ENCODE measurements at regions of chr3 and their contacts with region 1.

Region 1: DNA sequence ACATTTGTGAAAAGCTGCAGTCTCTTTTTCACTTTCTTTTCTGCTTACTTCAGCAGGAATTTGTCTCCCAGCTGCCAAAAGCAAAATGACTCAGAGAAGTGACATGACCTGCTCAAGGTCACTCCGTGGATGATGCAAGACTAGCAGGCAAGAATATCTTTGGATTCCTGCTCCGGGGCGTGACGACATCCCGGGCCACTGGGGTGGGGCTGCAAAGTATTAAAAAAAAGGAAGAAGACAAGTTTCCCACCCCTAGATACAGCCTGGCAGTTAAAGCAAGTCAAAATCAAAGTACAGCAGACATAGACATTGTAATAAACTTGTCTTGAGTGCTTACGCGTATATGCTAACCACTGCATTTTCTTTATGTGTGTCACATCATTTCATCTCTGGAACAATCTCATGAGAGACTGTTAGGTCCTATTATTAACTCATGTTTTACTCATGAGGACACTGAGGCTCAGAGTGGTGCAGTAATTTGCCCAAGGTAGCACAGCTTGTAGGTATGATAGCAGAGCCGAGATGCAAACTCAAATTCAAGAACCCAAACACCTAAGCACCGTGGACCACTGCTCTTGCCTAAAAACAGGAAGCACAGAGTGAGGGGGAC is 485.2 kb upstream of the PROK2 start:
- DNase-seq: peak; percentile 83 to 91 (median 87)
- ATAC-seq: peak; percentile 83 to 95 (median 92)
- H3K4me3 ChIP-seq: no peak overlapping the region
- H3K27ac ChIP-seq: peak overlapping the region in 6 of 12 donors; percentile 14 to 69 (median 26)
- H3K4me1 ChIP-seq: peaks cover 0 to 59% (median 43%) of the 10 kb centered on the region in 12 donors
- H3K27me3 ChIP-seq: no peaks in the 10 kb centered on the region
- CTCF ChIP-seq: no peak
- POLR2A ChIP-seq: no peak

Region 2: GRCh38 chr3:71875461-71875947 is 394.7 kb before region 1 on chr3:
- intact Hi-C with region 1: loop called in 8 of 10 experiments (anchors 5 to 10 kb)
- DNase-seq: peak; percentile 59 to 85 (median 76)
- ATAC-seq: peak; percentile 80 to 96 (median 91)
- H3K4me3 ChIP-seq: no peak overlapping the region
- H3K27ac ChIP-seq: no peak overlapping the region
- H3K4me1 ChIP-seq: peaks cover 0 to 8% (median 0%) of the 10 kb centered on the region in 12 donors
- H3K27me3 ChIP-seq: peaks cover 0 to 9% (median 0%) of the 10 kb centered on the region in 9 donors
- CTCF ChIP-seq: peak; percentile 77 to 90 (median 85)
- POLR2A ChIP-seq: no peak

Region 3: GRCh38 chr3:71955240-71956068 is 314.7 kb before region 1 on chr3:
- intact Hi-C with region 1: loop called in 8 of 10 experiments (anchors 5 to 10 kb)
- DNase-seq: peak; percentile 62 to 75 (median 72)
- ATAC-seq: peak in 3 of 4 donors; percentile 62 to 76 (median 76)
- H3K4me3 ChIP-seq: no peak overlapping the region
- H3K27ac ChIP-seq: no peak overlapping the region
- H3K4me1 ChIP-seq: peaks cover 0 to 10% (median 5%) of the 10 kb centered on the region in 12 donors
- H3K27me3 ChIP-seq: peaks cover 0 to 8% (median 0%) of the 10 kb centered on the region in 9 donors
- CTCF ChIP-seq: peak; percentile 49 to 84 (median 74)
- POLR2A ChIP-seq: no peak

Region 4: GRCh38 chr3:71962561-71963240 is 307.5 kb before region 1 on chr3:
- intact Hi-C with region 1: loop called in 8 of 10 experiments (anchors 5 to 10 kb)
- DNase-seq: no peak
- ATAC-seq: no peak
- H3K4me3 ChIP-seq: no peak overlapping the region
- H3K27ac ChIP-seq: no peak overlapping the region
- H3K4me1 ChIP-seq: no peaks in the 10 kb centered on the region
- H3K27me3 ChIP-seq: no peaks in the 10 kb centered on the region
- CTCF ChIP-seq: no peak
- POLR2A ChIP-seq: no peak

Region 5: GRCh38 chr3:71984843-71985613 is 285.1 kb before region 1 on chr3:
- intact Hi-C with region 1: loop called in 3 of 10 experiments (anchors 10 kb)
- DNase-seq: no peak
- ATAC-seq: no peak
- H3K4me3 ChIP-seq: no peak overlapping the region
- H3K27ac ChIP-seq: no peak overlapping the region
- H3K4me1 ChIP-seq: peaks cover 0 to 28% (median 0%) of the 10 kb centered on the region in 12 donors
- H3K27me3 ChIP-seq: no peaks in the 10 kb centered on the region
- CTCF ChIP-seq: no peak
- POLR2A ChIP-seq: no peak

Region 6: DNA sequence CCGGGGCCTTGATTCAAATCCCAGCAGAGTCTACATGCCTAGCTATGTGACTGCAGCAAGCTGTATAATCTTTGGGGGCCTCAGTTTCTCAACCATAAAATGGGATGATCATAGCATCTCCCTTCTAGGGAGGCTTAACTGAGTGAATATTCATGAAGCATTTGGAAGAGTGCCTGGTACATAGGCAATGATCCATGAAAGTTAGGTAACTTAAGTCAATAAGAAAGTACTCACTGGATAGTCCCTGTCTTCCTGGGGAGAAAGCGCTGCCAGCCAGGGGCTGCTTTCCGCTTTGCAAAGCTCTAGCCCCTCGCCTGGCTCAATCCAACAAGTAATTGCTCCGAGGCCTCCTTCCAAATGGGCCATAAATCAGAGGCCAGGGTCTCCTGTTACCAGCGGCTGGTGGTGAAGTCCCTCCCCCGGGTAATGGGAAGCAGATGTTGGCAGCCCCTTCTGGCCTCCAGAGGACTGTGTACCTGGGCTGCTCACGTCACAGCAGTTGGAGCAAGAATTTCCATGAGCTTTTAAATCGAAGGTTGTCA is 36.7 kb after region 1 on chr3:
- intact Hi-C with region 1: loop called in 1 of 10 experiments (anchors 5 kb)
- DNase-seq: no peak
- ATAC-seq: no peak
- H3K4me3 ChIP-seq: no peak overlapping the region
- H3K27ac ChIP-seq: no peak overlapping the region
- H3K4me1 ChIP-seq: peaks cover 0 to 28% (median 15%) of the 10 kb centered on the region in 12 donors
- H3K27me3 ChIP-seq: no peaks in the 10 kb centered on the region
- CTCF ChIP-seq: no peak
- POLR2A ChIP-seq: no peak

Region 7: GRCh38 chr3:72339116-72340030 is 69.2 kb after region 1 on chr3:
- intact Hi-C with region 1: loop called in 3 of 10 experiments (anchors 5 to 10 kb)
- DNase-seq: peak in 2 of 5 donors; percentile 45 to 79
- ATAC-seq: peak in 2 of 4 donors; percentile 35 to 75
- H3K4me3 ChIP-seq: no peak overlapping the region
- H3K27ac ChIP-seq: no peak overlapping the region
- H3K4me1 ChIP-seq: peaks cover 0 to 28% (median 14%) of the 10 kb centered on the region in 12 donors
- H3K27me3 ChIP-seq: no peaks in the 10 kb centered on the region
- CTCF ChIP-seq: no peak
- POLR2A ChIP-seq: no peak